GM23248 (cell line): ENCODE measurements at regions of chr11 and their contacts with region 1.

Region 1: DNA sequence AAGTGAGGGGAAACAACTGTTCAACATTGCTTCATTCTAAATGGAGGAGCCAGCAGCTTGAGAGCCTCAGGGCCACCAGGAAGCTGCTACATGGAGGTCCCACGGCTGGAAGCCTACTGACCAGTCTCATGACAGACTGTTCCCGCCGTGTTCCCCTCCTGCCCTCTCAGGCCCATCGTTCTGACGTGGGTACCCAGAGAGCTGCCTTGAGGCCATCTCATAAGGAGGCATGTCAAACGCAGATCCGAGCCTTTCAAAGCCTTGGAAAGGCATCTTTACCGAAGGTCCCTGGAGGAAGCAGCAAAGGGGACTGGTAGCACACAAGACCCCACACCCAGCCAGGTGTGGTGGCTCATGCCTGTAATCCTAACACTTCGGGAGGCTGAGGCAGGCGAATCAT is 8.3 kb upstream of the ARHGEF17 start:
- DNase-seq: no peak
- H3K4me3 ChIP-seq: no peak overlapping the region
- H3K27ac ChIP-seq: no peak overlapping the region
- H3K4me1 ChIP-seq: peaks cover 11% of the 10 kb centered on the region; the same call in 1 of the 2 replicates
- H3K27me3 ChIP-seq: no peaks in the 10 kb centered on the region

Region 2: GRCh38 chr11:73242251-73243079 is 57.3 kb before region 1 on chr11:
- in situ Hi-C with region 1: no loop called
- DNase-seq: peak; percentile 85
- H3K4me3 ChIP-seq: no peak overlapping the region
- H3K27ac ChIP-seq: no peak overlapping the region
- H3K4me1 ChIP-seq: peaks cover 15% of the 10 kb centered on the region
- H3K27me3 ChIP-seq: no peaks in the 10 kb centered on the region

Region 3: GRCh38 chr11:73335204-73335923 is 35.6 kb after region 1 on chr11:
- in situ Hi-C with region 1: loop called (anchors 5 kb)
- DNase-seq: peak; percentile 77
- H3K4me3 ChIP-seq: no peak overlapping the region
- H3K27ac ChIP-seq: peak overlapping the region; percentile 51
- H3K4me1 ChIP-seq: peaks cover 44% of the 10 kb centered on the region
- H3K27me3 ChIP-seq: no peaks in the 10 kb centered on the region

Region 4: DNA sequence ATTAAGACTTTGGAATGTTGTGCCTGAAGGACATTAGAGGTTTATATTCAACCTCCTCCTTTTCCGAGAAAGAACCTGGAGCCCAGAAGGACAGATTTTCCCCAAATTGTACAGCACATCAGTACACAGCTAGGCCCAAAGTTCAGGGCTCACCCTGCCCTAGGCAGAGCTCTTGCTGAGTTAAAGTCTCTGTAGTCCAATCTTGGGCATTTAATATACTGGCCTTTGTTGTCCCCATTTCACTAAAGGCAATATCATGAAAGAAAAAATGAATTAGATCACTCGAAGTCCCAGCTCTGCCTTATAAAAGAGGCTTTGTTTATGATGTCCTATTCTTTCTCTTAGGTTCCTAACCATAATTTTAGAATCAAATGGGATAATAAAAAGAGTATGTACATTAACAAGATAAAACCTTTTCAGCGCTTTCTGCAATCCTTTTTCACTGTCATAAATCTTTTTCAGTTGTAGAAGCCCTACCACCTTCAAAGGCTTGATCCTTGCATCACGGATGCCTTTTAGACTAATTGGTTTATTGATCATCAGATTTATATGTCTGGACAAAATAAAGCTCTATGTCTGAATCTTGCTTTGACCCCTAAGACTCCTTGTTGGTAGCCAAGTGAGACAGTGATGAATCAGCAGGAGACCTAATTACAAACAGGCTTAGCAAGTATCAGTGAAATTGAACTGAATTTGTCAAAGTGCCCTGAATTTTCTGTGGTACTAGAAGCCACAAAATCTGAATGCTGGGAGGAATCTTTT is 116.3 kb after region 1 on chr11:
- in situ Hi-C with region 1: no loop called
- DNase-seq: peak; percentile 81
- H3K4me3 ChIP-seq: 0 out of 2 replicates have a peak overlapping the region, but pooled peaks have one; percentile 19
- H3K27ac ChIP-seq: peak overlapping the region; percentile 91
- H3K4me1 ChIP-seq: peaks cover 42% of the 10 kb centered on the region
- H3K27me3 ChIP-seq: no peaks in the 10 kb centered on the region